Naive thymus-derived CD8-positive, alpha-beta T cell (primary cell): ENCODE measurements at regions of chr22 and their contacts with region 1.

Region 1: DNA sequence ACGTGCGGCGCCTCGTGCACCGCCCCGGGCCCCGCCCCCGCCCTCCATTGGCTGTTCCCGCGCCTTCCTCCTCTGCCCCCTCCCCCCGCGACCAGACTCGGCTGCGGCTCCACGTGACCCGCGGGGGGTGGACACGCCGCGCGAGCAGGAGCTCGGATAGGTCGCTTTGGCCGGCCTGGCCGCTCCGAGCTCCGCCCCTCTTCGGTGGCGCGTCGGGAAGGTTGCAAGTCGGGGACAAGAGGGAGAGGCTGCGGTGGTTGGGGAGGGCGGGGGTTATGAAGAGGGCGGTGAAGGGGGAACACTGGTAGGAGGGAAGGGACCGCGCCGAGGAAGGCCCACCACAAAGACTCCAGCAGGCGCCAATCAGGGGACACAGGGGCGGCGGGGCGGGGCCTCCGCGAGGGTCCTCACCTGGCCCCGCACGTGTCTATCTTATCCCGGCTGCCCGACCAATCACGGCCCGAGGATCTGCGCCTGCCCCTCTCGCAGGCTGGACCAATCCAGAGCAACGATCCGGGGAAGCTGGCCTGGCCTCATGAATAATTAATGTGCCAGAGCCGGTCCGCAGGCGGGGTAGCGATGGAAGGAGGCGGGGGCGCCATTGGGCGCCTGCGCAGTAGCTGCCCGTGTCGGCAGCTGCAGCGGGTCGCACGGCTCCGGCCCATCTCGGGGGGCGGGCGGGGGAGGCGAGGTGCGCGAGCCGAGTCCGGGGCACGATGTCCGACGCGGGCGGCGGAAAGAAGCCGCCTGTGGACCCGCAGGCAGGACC is at the start of gene TEF:
- DNase-seq: peak; percentile 95 to 100 (median 99)
- ATAC-seq: peak; percentile 83 to 86
- H3K4me3 Mint-ChIP-seq: peak within 1 kb of the TSS; percentile 88 to 97 (median 92)
- H3K27ac Mint-ChIP-seq: peak within 1 kb of the TSS; percentile 92 to 99 (median 98)
- H3K4me1 Mint-ChIP-seq: peaks cover 6 to 24% (median 21%) of the 10 kb centered on the region in 4 donors
- H3K27me3 Mint-ChIP-seq: no peaks in the 10 kb centered on the region
- polyA plus RNA-seq, gene TEF: 2.0 to 5.7 (median 4.4) TPM

Region 2: GRCh38 chr22:41301105-41302020 is 80.2 kb before region 1 on chr22 and contains the start of gene ZC3H7B:
- POLR2A ChIA-PET with region 1: interaction called, 13 read pairs
- DNase-seq: peak; percentile 76 to 90 (median 84)
- ATAC-seq: peak; percentile 97 to 98
- H3K4me3 Mint-ChIP-seq: peak within 1 kb of the TSS; percentile 76 to 93 (median 84)
- H3K27ac Mint-ChIP-seq: peak within 1 kb of the TSS; percentile 80 to 96 (median 91)
- H3K4me1 Mint-ChIP-seq: peaks cover 19 to 37% (median 33%) of the 10 kb centered on the region in 4 donors
- H3K27me3 Mint-ChIP-seq: no peaks in the 10 kb centered on the region
- polyA plus RNA-seq, gene ZC3H7B: 0.65 to 1.5 (median 1.2) TPM

Region 3: DNA sequence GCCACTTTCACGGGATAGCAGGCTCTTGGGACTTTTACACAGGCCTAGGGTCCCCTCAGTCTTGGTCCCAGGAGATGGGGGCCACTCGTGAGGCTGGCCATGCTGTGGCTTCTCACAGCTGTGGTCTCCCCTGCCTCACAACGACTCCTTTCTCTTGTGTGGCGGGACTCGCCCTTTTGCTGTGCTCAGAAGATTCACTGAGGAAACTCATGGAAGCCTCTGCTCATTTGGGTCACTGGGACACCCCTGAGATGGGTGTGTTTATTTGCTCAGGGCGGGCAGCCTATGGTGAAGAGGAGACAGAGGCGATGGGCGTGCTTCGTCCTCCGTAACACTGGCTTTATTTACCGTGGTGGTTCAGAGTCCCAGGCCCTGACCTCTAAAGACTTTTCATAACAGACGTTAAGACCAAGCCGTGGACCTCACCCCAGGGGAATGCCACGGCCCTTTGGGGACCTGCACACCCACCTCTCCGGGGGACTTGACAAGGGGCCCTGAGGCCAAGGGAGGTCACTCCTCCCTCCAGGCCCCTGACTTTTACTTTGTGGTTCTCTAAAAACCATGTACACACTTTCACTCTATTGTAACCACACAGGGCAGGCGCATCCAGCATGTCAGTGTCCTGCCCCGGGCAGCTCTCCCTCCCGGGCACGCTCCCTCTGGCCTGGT is 15.8 kb after region 1 on chr22:
- POLR2A ChIA-PET with region 1: no interaction called
- DNase-seq: no peak
- ATAC-seq: no peak
- H3K4me3 Mint-ChIP-seq: no peak overlapping the region
- H3K27ac Mint-ChIP-seq: no peak overlapping the region
- H3K4me1 Mint-ChIP-seq: no peaks in the 10 kb centered on the region
- H3K27me3 Mint-ChIP-seq: no peaks in the 10 kb centered on the region

Region 4: DNA sequence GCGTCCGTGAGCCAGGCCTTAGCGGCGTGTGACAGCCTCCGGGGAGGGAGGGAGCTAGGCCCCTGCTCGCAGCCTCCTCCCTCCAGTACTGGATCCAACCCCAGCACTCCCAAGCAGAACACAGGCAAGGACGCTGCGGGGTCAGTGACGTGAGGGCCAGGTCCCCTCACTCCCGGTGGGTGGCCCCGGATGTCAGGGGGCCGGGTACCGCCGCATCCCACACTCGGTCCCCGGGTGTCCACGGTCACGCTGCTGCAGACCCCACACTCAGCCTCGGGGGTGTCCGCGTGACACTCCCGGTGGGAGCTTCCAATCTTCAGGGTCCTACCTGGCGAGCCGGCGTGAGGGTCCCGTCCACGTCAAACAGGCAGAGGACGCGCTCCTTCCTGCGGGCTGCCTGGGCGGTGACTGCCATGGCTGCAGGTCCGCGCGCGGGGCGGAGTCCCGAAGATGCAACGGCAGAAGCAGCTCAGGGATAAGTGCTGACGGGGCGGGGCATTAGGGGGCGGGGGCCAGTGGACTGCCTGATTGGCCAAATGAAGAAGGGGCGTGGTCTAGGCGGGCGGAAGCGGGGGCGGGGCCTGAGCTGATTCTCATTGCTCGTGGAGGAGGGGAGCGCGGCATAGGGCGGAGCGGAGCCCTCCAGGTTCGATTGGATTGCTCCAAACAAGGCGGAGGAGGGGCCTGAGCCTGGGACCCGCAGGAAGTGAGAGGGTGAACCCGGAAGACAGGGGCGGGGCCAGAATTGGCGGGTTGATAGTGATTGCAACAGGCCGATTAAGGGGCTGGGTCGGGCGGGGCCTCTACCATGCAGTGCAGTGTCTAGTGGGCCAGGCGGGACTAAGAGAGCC is 208.1 kb after region 1 on chr22 and contains the start of gene PMM1:
- POLR2A ChIA-PET with region 1: interaction called, 14 read pairs
- DNase-seq: peak; percentile 98 to 100 (median 100)
- ATAC-seq: peak; percentile 94 to 97
- H3K4me3 Mint-ChIP-seq: peak within 1 kb of the TSS; percentile 84 to 96 (median 94)
- H3K27ac Mint-ChIP-seq: peak within 1 kb of the TSS; percentile 28 to 95 (median 89)
- H3K4me1 Mint-ChIP-seq: peaks cover 5 to 30% (median 15%) of the 10 kb centered on the region in 4 donors
- H3K27me3 Mint-ChIP-seq: no peaks in the 10 kb centered on the region
- polyA plus RNA-seq, gene PMM1: 29.9 to 32.8 (median 32.4) TPM

Region 5: GRCh38 chr22:41621099-41621910 is 239.8 kb after region 1 on chr22 and contains the start of gene XRCC6:
- POLR2A ChIA-PET with region 1: interaction called, 12 read pairs
- DNase-seq: peak; percentile 98 to 100 (median 100)
- ATAC-seq: peak; percentile 87 to 88
- H3K4me3 Mint-ChIP-seq: peak within 1 kb of the TSS; percentile 89 to 100 (median 97)
- H3K27ac Mint-ChIP-seq: peak within 1 kb of the TSS; percentile 95 to 100 (median 100)
- H3K4me1 Mint-ChIP-seq: peaks cover 16 to 57% (median 48%) of the 10 kb centered on the region in 4 donors
- H3K27me3 Mint-ChIP-seq: no peaks in the 10 kb centered on the region
- polyA plus RNA-seq, gene XRCC6: 436 to 513 (median 454) TPM